ENCODE measurements at regions of chr4 and their contacts with region 1.

Region 1: DNA sequence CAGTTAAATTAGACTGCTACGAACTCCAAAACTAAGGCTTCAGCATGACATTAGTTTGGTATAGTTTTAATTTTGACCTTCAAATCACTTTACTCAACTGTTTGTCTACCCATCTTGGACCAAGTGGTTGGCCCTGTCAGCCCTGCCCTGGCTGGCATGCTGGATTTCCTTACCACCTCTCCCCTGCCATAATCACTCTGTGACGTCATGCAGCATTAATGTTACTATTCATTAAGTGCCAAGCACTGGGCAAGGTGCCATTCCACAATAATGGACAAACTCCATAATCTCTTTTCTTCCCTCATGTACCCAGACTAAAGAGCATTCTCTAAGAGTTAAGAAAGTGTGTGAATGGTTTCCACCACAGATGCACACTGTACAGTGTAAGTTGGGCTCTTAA is 277.0 kb upstream of the INTU start:
- DNase-seq: no peak
- ATAC-seq: peak in 1 of 4 donors; percentile 62
- H3K4me3 ChIP-seq: no peak overlapping the region
- H3K27ac ChIP-seq: no peak overlapping the region
- H3K4me1 ChIP-seq: peaks cover 0 to 11% (median 0%) of the 10 kb centered on the region in 12 donors
- H3K27me3 ChIP-seq: no peaks in the 10 kb centered on the region
- CTCF ChIP-seq: no peak
- POLR2A ChIP-seq: no peak

Region 2: DNA sequence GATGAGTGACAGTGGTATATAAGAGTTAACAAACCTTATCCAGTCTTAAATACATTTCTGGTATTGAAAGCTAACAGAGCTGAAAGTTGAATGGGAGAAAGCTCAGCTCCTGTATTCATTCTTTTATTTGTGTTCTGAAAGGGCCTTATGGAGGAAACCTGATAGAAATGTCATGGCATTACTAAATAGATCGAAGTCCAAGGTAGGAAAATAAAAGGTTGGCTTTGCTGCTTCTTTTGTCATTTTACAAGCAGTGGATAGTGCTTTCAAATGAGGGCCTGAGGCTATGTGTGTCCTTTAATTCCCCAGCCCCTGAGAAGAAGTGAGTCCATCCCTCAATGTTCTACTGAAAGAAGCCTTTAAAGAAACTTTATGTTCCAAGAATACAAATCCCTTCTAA is 697.3 kb before region 1 on chr4:
- intact Hi-C with region 1: loop called in 1 of 10 experiments (anchors 5 kb)
- DNase-seq: no peak
- ATAC-seq: no peak
- H3K4me3 ChIP-seq: no peak overlapping the region
- H3K27ac ChIP-seq: no peak overlapping the region
- H3K4me1 ChIP-seq: peaks cover 0 to 2% (median 0%) of the 10 kb centered on the region in 12 donors
- H3K27me3 ChIP-seq: no peaks in the 10 kb centered on the region
- CTCF ChIP-seq: no peak
- POLR2A ChIP-seq: no peak

Region 3: DNA sequence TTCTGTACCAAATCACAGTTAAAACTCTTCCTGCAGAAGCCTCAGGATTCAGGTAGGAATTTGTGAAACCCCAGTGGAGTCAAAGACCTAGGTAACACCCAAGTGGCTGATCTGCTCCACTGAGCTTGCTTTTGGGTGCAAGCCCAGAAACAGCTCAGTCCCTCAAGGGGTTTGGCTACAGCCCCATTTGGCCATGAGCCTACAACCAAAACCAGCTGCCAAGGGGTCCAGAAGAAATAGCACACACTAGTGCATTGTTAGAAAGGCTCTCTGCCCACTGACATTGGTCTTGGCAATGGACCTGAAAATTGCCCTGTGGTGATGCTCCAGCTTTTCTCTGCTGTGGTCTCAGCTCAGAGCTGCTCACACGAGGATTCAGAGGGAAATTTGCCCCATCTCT is 300.4 kb before region 1 on chr4:
- intact Hi-C with region 1: no loop called
- DNase-seq: no peak
- ATAC-seq: no peak
- H3K4me3 ChIP-seq: no peak overlapping the region
- H3K27ac ChIP-seq: no peak overlapping the region
- H3K4me1 ChIP-seq: no peaks in the 10 kb centered on the region
- H3K27me3 ChIP-seq: no peaks in the 10 kb centered on the region
- CTCF ChIP-seq: no peak
- POLR2A ChIP-seq: no peak

Measured in heart left ventricle (tissue), 16 donors.